Panc1 (cell line): ENCODE measurements at regions of chr5 and their contacts with region 1.

Region 1: GRCh38 chr5:83848941-83849340 is 128.3 kb upstream of the HAPLN1 start:
- DNase-seq: no peak
- ATAC-seq: no peak
- H3K4me3 ChIP-seq: no peak overlapping the region
- H3K27ac ChIP-seq: no peak overlapping the region
- H3K4me1 ChIP-seq: no peaks in the 10 kb centered on the region
- H3K27me3 ChIP-seq: no peaks in the 10 kb centered on the region
- CTCF ChIP-seq: no peak

Region 2: DNA sequence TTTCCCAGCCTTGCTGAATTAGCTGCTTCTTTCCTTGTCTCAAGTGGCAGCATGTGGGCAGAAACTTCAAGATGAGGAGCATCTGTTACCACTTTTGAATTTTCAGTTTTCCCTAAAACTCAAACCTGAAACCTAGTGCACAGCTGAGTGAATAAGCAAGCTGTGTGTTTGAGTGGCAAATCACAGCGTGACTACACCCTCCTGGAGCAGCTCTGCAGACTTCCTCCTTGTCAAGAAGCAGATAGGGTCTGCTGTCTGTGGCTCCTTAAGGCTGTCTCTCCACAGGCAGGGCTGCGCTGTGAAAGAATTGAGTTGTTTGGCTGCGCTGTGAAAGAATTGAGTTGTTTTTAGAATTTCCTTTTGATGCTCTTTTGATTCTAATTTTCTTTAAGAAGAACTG is 51.4 kb after region 1 on chr5:
- CTCF ChIA-PET with region 1: no interaction called
- POLR2A ChIA-PET with region 1: no interaction called
- in situ Hi-C with region 1: no loop called
- intact Hi-C with region 1: no loop called
- DNase-seq: no peak
- ATAC-seq: no peak
- H3K4me3 ChIP-seq: no peak overlapping the region
- H3K27ac ChIP-seq: no peak overlapping the region
- H3K4me1 ChIP-seq: no peaks in the 10 kb centered on the region
- H3K27me3 ChIP-seq: no peaks in the 10 kb centered on the region
- CTCF ChIP-seq: no peak

Region 3: GRCh38 chr5:83946516-83946915 is 97.6 kb after region 1 on chr5:
- CTCF ChIA-PET with region 1: no interaction called
- POLR2A ChIA-PET with region 1: interaction called, 11 read pairs
- in situ Hi-C with region 1: no loop called
- intact Hi-C with region 1: no loop called
- DNase-seq: no peak
- ATAC-seq: no peak
- H3K4me3 ChIP-seq: no peak overlapping the region
- H3K27ac ChIP-seq: no peak overlapping the region
- H3K4me1 ChIP-seq: no peaks in the 10 kb centered on the region
- H3K27me3 ChIP-seq: no peaks in the 10 kb centered on the region
- CTCF ChIP-seq: no peak

Region 4: GRCh38 chr5:84032324-84032723 is 183.4 kb after region 1 on chr5:
- CTCF ChIA-PET with region 1: no interaction called
- POLR2A ChIA-PET with region 1: no interaction called
- in situ Hi-C with region 1: no loop called
- intact Hi-C with region 1: no loop called
- DNase-seq: no peak
- ATAC-seq: no peak
- H3K4me3 ChIP-seq: no peak overlapping the region
- H3K27ac ChIP-seq: no peak overlapping the region
- H3K4me1 ChIP-seq: no peaks in the 10 kb centered on the region
- H3K27me3 ChIP-seq: no peaks in the 10 kb centered on the region
- CTCF ChIP-seq: no peak